ENCODE measurements at regions of chr4 and their contacts with region 1.

Region 1: GRCh38 chr4:73740353-73740778 is at the start of gene CXCL8:
- DNase-seq: no peak
- ATAC-seq: peak; percentile 89
- H3K4me3 ChIP-seq: no peak within 1 kb of the TSS
- H3K4me3 Mint-ChIP-seq: peak within 1 kb of the TSS in 2 of 10 donors; percentile 26 to 40
- H3K27ac ChIP-seq: no peak within 1 kb of the TSS
- H3K27ac Mint-ChIP-seq: no peak within 1 kb of the TSS
- H3K4me1 ChIP-seq: no peaks in the 10 kb centered on the region
- H3K4me1 Mint-ChIP-seq: peaks cover 0 to 5% (median 0%) of the 10 kb centered on the region in 7 donors
- H3K27me3 ChIP-seq: no peaks in the 10 kb centered on the region
- H3K27me3 Mint-ChIP-seq: peaks cover 0 to 8% (median 3%) of the 10 kb centered on the region in 5 donors
- total RNA-seq, gene CXCL8: 1.8 to 501 (median 4.4) TPM

Region 2: GRCh38 chr4:73816814-73817213 is 76.4 kb after region 1 on chr4:
- CTCF ChIA-PET with region 1: no interaction called
- POLR2A ChIA-PET with region 1: no interaction called
- intact Hi-C with region 1: loop called in 1 of 2 experiments (anchors 5 kb)
- DNase-seq: no peak
- ATAC-seq: no peak
- H3K4me3 ChIP-seq: no peak overlapping the region
- H3K4me3 Mint-ChIP-seq: no peak overlapping the region
- H3K27ac ChIP-seq: no peak overlapping the region
- H3K27ac Mint-ChIP-seq: no peak overlapping the region
- H3K4me1 ChIP-seq: no peaks in the 10 kb centered on the region
- H3K4me1 Mint-ChIP-seq: peaks cover 0 to 33% (median 0%) of the 10 kb centered on the region in 7 donors
- H3K27me3 ChIP-seq: no peaks in the 10 kb centered on the region
- H3K27me3 Mint-ChIP-seq: peaks cover 0 to 2% (median 0%) of the 10 kb centered on the region in 5 donors

Region 3: DNA sequence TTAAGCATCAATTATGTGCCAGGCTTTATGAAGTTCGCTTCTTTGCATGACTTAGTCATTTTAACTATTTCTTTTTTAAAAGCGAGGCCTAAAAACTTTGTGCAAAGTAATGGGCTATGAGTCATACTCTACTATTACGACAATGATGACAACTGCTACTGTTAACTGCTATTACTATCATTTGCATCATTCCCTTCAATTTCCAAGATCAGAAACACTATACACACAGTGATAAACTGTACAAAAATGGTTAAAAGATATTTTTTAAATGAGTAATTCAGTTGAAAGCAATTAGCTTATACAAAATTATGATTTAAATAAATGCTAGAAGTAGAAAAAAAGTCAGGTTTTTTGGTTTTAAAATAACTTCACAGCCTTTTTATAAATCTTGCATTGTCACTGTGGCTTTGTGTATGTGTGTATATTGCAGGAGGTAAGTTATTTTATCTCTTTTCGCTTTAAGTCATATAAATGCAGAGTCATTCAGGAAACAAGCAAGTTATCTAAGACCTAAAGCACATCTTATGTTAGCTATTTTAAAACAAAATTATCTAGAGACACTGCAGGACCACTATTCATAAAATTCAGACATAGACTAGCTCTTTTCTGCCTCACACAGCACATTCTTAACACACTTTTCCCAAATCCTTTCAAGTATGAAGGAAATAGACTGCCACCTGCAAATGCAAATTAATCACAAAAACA is 316.6 kb after region 1 on chr4:
- CTCF ChIA-PET with region 1: no interaction called
- POLR2A ChIA-PET with region 1: no interaction called
- intact Hi-C with region 1: no loop called
- DNase-seq: no peak
- ATAC-seq: peak; percentile 84
- H3K4me3 ChIP-seq: no peak overlapping the region
- H3K4me3 Mint-ChIP-seq: no peak overlapping the region
- H3K27ac ChIP-seq: no peak overlapping the region
- H3K27ac Mint-ChIP-seq: no peak overlapping the region
- H3K4me1 ChIP-seq: no peaks in the 10 kb centered on the region
- H3K4me1 Mint-ChIP-seq: no peaks in the 10 kb centered on the region
- H3K27me3 ChIP-seq: no peaks in the 10 kb centered on the region
- H3K27me3 Mint-ChIP-seq: peaks cover 0 to 16% (median 5%) of the 10 kb centered on the region in 5 donors

Measured in naive thymus-derived CD4-positive, alpha-beta T cell (primary cell).